Left cardiac atrium (tissue), 4 donors: ENCODE measurements at regions of chr10 and their contacts with region 1.

Region 1: DNA sequence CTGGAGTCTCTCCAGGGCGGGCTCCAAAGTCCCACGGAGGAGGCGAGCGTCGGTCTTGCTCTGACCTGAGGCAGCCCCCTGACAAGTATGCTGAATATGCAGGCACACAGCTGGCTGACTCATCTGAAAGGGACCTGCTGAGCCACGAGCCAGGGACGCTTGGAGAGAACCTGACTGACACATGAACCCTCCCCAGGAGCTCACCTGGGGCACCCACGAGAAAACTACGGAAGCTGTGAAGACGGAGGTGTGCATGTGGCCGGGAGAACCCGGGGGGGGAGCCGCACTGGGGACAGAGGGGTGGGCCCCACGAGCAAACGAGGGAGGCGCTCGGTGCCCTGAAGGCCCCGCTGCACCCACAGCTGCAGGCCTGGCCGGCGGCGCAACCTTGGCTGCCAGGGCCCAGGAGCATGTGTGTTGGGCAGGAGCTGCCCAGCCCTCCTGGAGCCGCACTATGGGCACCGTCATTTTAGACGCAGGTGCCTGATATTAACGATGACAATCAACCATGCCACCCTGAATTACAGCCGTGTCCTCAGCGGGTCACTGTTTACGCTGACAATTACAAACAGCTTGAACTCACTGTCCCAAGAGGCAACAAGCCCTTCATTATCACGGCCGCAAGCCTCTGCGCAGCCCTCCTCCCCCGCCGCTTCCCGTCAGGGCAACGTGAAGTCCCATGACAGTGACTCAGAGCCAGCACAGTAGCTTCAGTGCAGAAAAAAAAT is 64.7 kb downstream of the DIP2C start:
- DNase-seq: peak; percentile 82
- ATAC-seq: peak; percentile 86 to 88

Region 2: GRCh38 chr10:689433-690371 is 64.9 kb after region 1 on chr10 and contains the start of gene DIP2C:
- intact Hi-C with region 1: loop called in 1 of 2 experiments (anchors 5 kb)
- DNase-seq: peak; percentile 85
- ATAC-seq: peak; percentile 86 to 88
- total RNA-seq, gene DIP2C: 21.6 to 30.5 TPM

Region 3: DNA sequence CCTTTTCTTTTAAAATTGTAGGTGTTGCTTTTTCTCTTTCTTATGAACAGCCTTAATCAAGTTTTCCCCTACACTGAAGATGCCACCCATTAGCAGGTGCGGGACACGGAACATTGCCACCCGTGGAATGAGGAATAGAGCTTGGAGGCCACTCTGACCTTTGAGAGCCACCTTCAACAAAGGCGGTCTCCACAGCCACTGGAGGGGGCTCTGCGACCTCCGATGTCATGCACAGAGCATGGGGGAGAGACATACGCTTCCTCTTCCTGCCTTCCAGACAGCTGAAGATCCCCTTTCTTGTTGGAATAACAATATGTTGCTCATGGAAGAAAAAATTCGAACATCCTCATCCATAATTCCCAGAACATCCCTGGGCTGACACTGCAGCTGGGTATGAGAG is 1073.4 kb after region 1 on chr10:
- intact Hi-C with region 1: no loop called
- DNase-seq: no peak
- ATAC-seq: no peak